Vagina (tissue), 2 donors: ENCODE measurements at regions of chr17 and their contacts with region 1.

Region 1: DNA sequence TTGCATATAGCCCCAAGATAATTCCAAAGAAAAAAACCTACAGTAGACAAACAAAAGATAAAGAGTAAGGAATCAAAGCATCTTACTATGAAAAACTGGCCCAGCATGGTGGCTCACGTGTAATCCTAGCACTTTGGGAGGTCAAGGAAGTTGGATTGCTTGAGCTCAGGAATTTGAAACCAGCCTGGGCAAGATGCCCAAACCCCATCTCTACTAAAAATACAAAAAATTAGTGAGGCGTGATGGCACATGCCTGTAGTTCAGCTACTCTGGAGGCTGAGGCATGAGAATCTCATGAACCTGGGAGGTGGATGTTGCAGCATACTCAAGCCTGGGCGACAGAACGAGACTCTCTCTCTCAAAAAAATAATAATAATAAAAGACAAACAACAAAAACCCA is 764.7 kb upstream of the KIF2B start:
- DNase-seq: no peak
- H3K4me3 ChIP-seq: no peak overlapping the region
- H3K27ac ChIP-seq: no peak overlapping the region
- H3K4me1 ChIP-seq: no peaks in the 10 kb centered on the region
- H3K27me3 ChIP-seq: no peaks in the 10 kb centered on the region
- CTCF ChIP-seq: no peak
- POLR2A ChIP-seq: no peak

Region 2: DNA sequence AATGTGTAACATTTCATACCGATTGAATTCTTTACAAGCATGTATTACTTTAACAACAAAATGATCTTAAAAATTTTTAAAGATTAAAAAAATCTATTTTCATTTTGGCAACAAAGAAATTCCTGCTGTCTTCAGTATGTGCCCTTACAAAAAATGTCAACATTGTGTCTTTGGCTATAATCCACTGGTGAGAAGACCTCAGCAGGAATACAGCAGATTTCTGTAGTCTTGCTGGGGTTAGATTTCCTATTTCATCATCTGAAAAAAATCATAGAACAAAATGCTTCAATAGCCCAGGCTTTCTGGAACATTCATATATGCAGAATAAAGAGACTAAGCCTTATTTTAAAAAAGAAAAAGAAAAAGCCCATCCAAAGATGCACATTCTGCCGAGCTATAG is 770.4 kb before region 1 on chr17:
- intact Hi-C with region 1: loop called (anchors 5 kb)
- DNase-seq: no peak
- H3K4me3 ChIP-seq: no peak overlapping the region
- H3K27ac ChIP-seq: no peak overlapping the region
- H3K4me1 ChIP-seq: no peaks in the 10 kb centered on the region
- H3K27me3 ChIP-seq: no peaks in the 10 kb centered on the region
- CTCF ChIP-seq: no peak
- POLR2A ChIP-seq: no peak

Region 3: GRCh38 chr17:53006006-53006405 is 52.0 kb before region 1 on chr17:
- intact Hi-C with region 1: no loop called
- DNase-seq: no peak
- H3K4me3 ChIP-seq: no peak overlapping the region
- H3K27ac ChIP-seq: no peak overlapping the region
- H3K4me1 ChIP-seq: no peaks in the 10 kb centered on the region
- H3K27me3 ChIP-seq: no peaks in the 10 kb centered on the region
- CTCF ChIP-seq: no peak
- POLR2A ChIP-seq: no peak